Gastrocnemius medialis (tissue), 4 donors: ENCODE measurements at regions of chr4 and their contacts with region 1.

Region 1: GRCh38 chr4:3201718-3202702 is 46.9 kb upstream of the MSANTD1 start:
- DNase-seq: peak; percentile 40 to 58
- ATAC-seq: peak; percentile 61 to 67
- H3K4me3 ChIP-seq: no peak overlapping the region
- H3K27ac ChIP-seq: peak overlapping the region; percentile 77 to 85 (median 82)
- H3K4me1 ChIP-seq: peaks cover 48 to 56% of the 10 kb centered on the region in 2 donors
- H3K27me3 ChIP-seq: no peaks in the 10 kb centered on the region
- CTCF ChIP-seq: no peak
- POLR2A ChIP-seq: peak in 1 of 2 donors; percentile 70

Region 2: DNA sequence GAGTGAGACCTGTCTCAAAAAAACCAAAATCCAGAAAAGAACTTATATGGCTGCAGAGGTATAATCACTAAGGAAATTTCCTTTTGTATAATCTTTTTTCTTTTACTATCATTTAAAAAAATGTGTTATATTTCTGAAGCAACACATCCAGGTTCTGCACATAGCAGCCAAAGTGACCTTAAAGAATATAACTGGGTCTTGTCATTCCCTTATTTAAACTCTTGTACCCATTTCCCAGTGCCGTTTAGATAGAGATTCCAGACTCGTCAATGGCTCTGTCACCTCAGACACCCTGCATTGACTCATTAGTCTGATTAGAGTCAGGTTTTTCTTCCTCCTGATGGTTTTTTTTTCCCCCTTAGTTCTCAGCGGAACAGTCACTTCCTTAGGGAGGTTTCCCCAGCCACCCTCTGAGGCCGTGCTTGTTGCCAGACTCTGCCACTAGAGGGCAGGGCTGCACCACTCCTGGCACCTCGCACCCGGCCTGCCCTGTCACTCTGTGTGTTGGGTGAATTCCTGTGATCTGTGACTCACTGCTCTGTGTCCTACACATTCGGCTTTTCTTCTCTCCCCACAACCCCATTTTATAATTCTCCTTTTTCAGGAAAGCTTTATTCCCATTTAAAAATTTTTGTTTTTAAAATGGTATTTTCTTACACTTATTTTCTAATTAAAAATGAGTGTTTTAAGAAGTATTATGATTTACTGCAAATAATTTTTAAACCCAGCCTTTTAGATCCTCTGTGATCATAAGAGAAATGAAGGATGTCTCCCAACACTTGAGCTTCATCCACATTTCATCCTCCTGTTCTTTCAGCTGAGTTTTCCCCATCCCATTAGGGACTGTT is 95.4 kb before region 1 on chr4:
- in situ Hi-C with region 1: no loop called
- intact Hi-C with region 1: loop called (anchors 5 kb)
- DNase-seq: peak; percentile 82 to 89
- ATAC-seq: peak; percentile 94 to 98
- H3K4me3 ChIP-seq: peak overlapping the region in 1 of 4 donors; percentile 10
- H3K27ac ChIP-seq: peak overlapping the region; percentile 72 to 84 (median 82)
- H3K4me1 ChIP-seq: peaks cover 27% of the 10 kb centered on the region in 2 donors
- H3K27me3 ChIP-seq: no peaks in the 10 kb centered on the region
- CTCF ChIP-seq: peak; percentile 94 to 99 (median 96)
- POLR2A ChIP-seq: no peak

Region 3: DNA sequence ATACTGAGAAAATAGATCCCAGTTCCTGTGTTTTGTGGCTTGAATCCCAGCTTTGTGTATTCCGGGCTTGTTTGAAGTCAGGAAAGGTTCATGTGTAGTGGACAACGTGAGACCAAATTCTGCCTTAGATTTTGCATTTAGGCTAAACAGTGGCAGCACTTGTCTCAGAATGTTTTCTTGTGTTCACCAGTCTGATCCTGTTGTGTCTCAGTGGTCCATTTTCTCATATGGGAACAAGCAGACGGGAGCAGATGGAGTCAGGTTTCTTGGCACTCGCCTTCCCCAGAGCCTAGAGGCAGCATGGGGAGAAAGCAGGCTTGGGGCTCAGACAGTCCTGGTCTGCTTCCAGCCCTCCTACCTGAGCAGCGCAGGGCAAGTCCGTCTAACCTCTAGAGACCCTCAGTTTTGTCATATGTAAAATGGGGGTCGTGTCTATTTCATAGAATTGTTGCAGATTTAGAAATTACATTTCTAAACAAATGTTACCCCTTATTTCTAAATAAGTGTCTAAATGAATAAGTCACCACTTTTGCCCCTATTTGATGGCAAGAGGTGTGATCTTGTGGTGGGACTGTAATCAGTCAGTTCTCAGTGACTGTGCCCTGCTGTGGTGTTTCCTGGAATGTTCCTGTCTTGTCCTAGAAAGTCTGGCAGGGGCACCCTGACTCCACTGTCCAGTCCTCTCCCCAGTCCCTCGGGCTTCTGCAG is 18.6 kb after region 1 on chr4:
- in situ Hi-C with region 1: no loop called
- intact Hi-C with region 1: loop called (anchors 1 kb)
- DNase-seq: peak; percentile 40 to 75
- ATAC-seq: peak; percentile 56 to 71
- H3K4me3 ChIP-seq: no peak overlapping the region
- H3K27ac ChIP-seq: peak overlapping the region; percentile 69 to 81 (median 76)
- H3K4me1 ChIP-seq: peaks cover 18 to 23% of the 10 kb centered on the region in 2 donors
- H3K27me3 ChIP-seq: no peaks in the 10 kb centered on the region
- CTCF ChIP-seq: no peak
- POLR2A ChIP-seq: no peak

Region 4: GRCh38 chr4:3452376-3452775 is 250.4 kb after region 1 on chr4:
- in situ Hi-C with region 1: loop called in 1 of 4 experiments (anchors 25 kb)
- intact Hi-C with region 1: loop called (anchors 10 kb)
- DNase-seq: no peak
- ATAC-seq: peak in 1 of 2 donors; percentile 83
- H3K4me3 ChIP-seq: no peak overlapping the region
- H3K27ac ChIP-seq: peak overlapping the region in 1 of 4 donors; percentile 69
- H3K4me1 ChIP-seq: peaks cover 0 to 4% of the 10 kb centered on the region in 2 donors
- H3K27me3 ChIP-seq: no peaks in the 10 kb centered on the region
- CTCF ChIP-seq: peak in 2 of 5 experiments; percentile 6 to 30
- POLR2A ChIP-seq: no peak

Region 5: DNA sequence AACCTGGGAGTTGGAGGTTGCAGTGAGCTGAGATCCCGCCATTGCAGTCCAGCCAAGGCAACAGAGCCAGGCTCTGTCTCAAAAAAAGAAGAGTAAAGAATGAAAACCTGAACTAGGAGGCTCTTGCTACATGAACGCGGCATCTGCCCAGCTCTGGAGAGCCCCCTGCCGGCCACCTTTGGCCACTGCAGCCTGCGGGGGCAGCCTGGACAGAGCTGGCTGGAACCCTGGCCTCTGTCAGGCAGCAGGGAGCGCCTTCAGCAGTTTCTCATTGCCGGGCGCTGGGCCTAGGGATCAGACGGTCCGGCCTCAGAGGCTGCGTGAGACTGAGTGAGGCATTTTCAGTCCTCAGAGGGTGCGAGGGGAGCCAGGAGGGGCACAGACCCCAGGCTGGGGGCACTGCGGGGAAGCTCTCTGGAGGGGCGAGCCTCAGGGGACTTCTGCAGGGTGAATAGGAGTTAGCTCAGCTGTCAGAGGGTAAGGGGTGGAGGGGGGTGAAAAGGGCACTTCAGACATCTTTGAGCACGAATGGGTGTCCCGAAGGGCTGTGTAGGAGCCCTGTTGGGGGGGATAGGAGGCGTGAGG is 278.6 kb after region 1 on chr4:
- in situ Hi-C with region 1: no loop called
- intact Hi-C with region 1: loop called (anchors 5 kb)
- DNase-seq: peak; percentile 47 to 82
- ATAC-seq: peak in 1 of 2 donors; percentile 22
- H3K4me3 ChIP-seq: no peak overlapping the region
- H3K27ac ChIP-seq: peak overlapping the region; percentile 99 to 100 (median 99)
- H3K4me1 ChIP-seq: peaks cover 49 to 57% of the 10 kb centered on the region in 2 donors
- H3K27me3 ChIP-seq: no peaks in the 10 kb centered on the region
- CTCF ChIP-seq: peak; percentile 98 to 100 (median 99)
- POLR2A ChIP-seq: peak in 1 of 2 donors; percentile 14